ENCODE measurements at regions of chr11 and their contacts with region 1.

Region 1: DNA sequence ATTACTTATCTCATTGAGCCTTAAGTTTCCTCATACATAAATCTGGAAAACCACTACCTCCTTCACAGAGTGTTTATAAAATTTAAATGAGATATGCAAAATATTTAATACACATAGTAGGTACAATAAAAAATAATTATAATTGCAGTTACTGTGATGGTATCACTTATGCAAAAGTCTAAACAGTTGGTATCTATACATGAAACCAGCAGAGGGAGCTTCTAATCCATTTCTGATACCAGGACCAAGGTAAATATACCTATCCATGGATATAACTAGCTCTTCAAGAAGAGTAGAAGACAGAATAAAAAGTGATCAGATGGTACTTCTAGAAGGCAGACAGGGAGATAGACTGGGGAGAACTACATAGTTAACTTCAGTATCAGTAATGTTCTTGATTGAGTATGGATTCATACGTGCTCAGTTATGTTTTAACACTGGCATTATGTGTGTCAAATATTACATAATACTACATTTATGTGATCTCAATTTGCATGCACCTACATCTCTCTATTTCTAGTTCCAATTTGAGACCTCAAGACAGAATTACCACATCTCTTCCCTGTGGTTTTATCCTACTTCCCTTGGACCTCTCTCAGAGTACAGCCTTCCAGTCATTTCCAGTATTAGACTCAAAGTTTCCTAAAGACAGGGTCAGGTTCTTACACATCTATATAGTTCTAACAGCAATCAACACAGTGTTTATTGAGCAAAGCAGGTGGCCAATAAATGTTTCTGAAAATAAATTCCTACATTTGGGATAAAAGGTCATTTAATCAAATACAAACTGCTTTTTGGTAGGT is 13.7 kb upstream of the TSG101 start:
- DNase-seq: peak; percentile 43
- H3K4me3 ChIP-seq: no peak overlapping the region
- H3K27ac ChIP-seq: no peak overlapping the region
- H3K4me1 ChIP-seq: no peaks in the 10 kb centered on the region
- H3K27me3 ChIP-seq: no peaks in the 10 kb centered on the region
- CTCF ChIP-seq: peak in 1 of 2 donors; percentile 26
- POLR2A ChIP-seq: no peak

Region 2: GRCh38 chr11:18526521-18527296 is 13.7 kb before region 1 on chr11 and contains the start of gene TSG101:
- CTCF ChIA-PET with region 1: interaction called, 15 read pairs
- POLR2A ChIA-PET with region 1: interaction called, 3 read pairs
- dilution Hi-C with region 1: no loop called
- intact Hi-C with region 1: no loop called
- DNase-seq: peak; percentile 98
- H3K4me3 ChIP-seq: peak within 1 kb of the TSS; percentile 51 to 96 (median 74)
- H3K27ac ChIP-seq: peak within 1 kb of the TSS; percentile 99
- H3K4me1 ChIP-seq: peaks cover 15% of the 10 kb centered on the region
- H3K27me3 ChIP-seq: no peaks in the 10 kb centered on the region
- CTCF ChIP-seq: no peak
- POLR2A ChIP-seq: peak; percentile 96
- total RNA-seq, gene TSG101: 41.3 and 45.5 TPM in 2 replicates

Region 3: GRCh38 chr11:18634140-18635032 is 94.0 kb after region 1 on chr11 and contains the start of gene SPTY2D1:
- CTCF ChIA-PET with region 1: interaction called, 13 read pairs
- POLR2A ChIA-PET with region 1: no interaction called
- dilution Hi-C with region 1: no loop called
- intact Hi-C with region 1: no loop called
- DNase-seq: peak; percentile 99
- H3K4me3 ChIP-seq: peak within 1 kb of the TSS; percentile 79 to 99 (median 97)
- H3K27ac ChIP-seq: peak within 1 kb of the TSS; percentile 83
- H3K4me1 ChIP-seq: peaks cover 16% of the 10 kb centered on the region
- H3K27me3 ChIP-seq: peaks cover 0 to 1% of the 10 kb centered on the region in 2 experiments
- CTCF ChIP-seq: no peak
- POLR2A ChIP-seq: peak; percentile 96
- total RNA-seq, gene SPTY2D1: 13.7 and 18.7 TPM in 2 replicates

Region 4: DNA sequence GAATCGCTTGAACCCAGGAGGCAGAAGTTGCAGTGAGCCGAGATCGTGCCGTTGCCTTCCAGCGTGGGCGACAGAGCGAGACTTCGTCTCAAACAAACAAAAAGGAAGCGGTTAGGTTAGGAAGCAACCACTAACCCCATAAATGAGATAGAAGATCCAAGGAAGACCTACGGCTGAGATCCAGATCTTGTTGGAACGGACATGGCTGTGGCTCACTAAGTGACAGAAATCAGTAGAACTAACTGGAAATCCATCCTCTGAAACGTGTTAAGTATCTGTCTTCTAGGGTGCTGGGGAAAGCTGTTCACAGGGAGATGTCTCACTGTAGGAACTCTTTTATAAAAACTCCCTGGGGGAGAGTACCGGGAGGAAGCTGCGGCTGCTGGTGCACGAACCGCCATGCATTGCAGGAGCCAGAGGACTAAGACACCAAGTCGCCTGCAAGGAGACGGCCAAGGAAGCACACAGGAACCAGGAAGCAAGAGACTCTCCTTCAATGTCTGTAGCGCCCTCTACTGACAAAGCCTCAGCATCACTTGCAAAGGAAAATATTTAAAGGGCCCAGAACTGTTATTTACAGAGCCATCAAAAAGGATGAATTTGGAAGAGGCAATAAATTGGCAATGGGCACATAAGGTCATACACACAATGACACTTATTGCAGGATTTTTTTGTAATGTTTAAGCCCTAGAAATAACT is 110.6 kb after region 1 on chr11:
- CTCF ChIA-PET with region 1: interaction called, 63 read pairs
- POLR2A ChIA-PET with region 1: no interaction called
- dilution Hi-C with region 1: no loop called
- intact Hi-C with region 1: loop called (anchors 1 kb)
- DNase-seq: peak; percentile 58
- H3K4me3 ChIP-seq: no peak overlapping the region
- H3K27ac ChIP-seq: no peak overlapping the region
- H3K4me1 ChIP-seq: no peaks in the 10 kb centered on the region
- H3K27me3 ChIP-seq: no peaks in the 10 kb centered on the region
- CTCF ChIP-seq: peak; percentile 68 to 69
- POLR2A ChIP-seq: no peak

Region 5: DNA sequence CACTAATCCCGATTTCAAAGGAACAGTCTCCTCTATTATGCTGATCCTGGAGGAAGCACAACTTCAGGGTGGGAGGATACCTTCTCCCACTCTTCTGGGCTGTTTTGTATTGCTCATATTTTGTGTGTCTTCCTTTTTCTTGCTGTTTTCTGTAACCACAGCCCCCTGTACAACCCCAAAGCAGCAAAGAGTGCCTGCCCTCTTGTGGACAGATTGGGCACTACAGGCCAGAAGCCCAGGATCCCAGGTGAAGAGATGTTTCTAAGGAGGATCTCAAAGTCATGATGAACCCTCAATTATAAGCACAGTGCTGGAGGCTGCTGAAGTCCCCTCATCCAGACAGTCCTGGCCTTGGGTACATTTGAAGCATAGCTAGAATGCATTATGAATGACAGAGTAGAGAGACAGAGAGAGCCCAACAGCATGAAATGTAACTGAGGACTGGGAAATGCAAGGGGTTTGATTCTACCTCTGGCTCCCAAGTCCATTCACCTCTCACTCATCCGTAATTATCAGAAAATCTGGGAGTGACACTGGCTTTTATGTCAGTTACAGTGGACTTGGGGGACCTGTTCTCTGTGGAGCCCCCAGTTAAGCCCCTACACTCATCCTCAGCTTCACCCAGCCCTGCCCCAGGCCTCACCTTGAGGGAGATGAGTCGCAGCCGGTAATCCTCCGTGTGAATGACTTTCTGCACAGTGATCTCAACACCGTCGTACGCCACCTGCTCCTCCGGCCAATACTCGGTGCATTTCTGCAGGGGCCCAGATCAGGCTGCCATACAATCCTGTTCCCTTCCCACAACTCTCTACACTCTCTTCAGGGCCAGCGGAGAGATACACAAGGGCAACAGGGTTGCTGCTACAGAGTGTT is 191.8 kb after region 1 on chr11:
- CTCF ChIA-PET with region 1: interaction called, 10 read pairs
- POLR2A ChIA-PET with region 1: no interaction called
- dilution Hi-C with region 1: no loop called
- intact Hi-C with region 1: loop called (anchors 1 kb)
- DNase-seq: peak; percentile 60
- H3K4me3 ChIP-seq: no peak overlapping the region
- H3K27ac ChIP-seq: no peak overlapping the region
- H3K4me1 ChIP-seq: no peaks in the 10 kb centered on the region
- H3K27me3 ChIP-seq: peaks cover 0 to 3% of the 10 kb centered on the region in 2 experiments
- CTCF ChIP-seq: peak; percentile 92 to 93
- POLR2A ChIP-seq: no peak

Region 6: DNA sequence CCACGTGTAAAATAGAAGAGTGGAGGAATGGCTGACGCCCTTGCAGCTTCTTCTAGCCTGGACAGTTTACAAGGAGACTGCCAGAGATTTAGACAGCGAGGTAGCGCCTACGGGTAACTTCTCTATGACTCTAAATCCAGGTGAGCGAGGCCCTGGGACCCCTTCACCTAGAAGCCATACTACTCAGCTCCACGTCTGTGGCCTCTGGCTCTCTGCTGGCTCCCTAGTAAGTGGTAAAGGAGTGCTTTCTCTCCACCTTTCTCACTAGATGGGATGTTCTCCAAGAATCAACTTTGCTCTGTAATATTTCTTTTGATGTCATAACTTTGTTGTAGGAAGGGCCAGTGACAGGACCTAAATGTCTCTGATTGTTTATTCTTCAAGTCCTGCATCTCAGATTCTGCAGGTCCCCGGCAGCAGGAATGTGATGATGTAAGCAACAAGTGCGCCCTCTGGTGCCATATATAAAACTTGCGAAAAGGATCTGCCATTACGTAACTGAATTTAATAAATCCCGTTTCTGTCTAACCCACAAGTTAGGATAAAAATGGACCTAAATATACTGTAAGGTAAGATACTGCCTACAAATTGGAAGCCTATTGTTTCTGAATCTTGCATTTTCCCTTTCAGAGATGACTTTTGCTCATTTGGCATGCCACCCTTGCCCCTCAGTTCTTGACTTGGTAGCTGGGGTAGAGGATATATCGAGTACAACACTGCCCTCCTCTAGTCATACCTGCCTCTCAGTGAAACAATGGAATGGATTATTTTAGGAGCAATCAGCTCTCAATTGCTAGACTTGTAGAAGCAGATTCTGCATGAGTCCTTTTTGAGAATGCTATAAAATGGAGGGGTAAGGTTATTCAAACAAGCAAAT is 262.2 kb after region 1 on chr11:
- CTCF ChIA-PET with region 1: interaction called, 7 read pairs
- POLR2A ChIA-PET with region 1: no interaction called
- dilution Hi-C with region 1: no loop called
- intact Hi-C with region 1: loop called (anchors 2 kb)
- DNase-seq: peak; percentile 69
- H3K4me3 ChIP-seq: no peak overlapping the region
- H3K27ac ChIP-seq: no peak overlapping the region
- H3K4me1 ChIP-seq: peaks cover 3% of the 10 kb centered on the region
- H3K27me3 ChIP-seq: peaks cover 8 to 13% of the 10 kb centered on the region in 2 experiments
- CTCF ChIP-seq: peak; percentile 53 to 57
- POLR2A ChIP-seq: no peak

Measured in endothelial cell of umbilical vein (primary cell).